Activated CD4-positive, alpha-beta memory T cell treated with anti-CD3 and anti-CD28 coated beads for 36 hours (primary cell): ENCODE measurements at regions of chr11 and their contacts with region 1.

Region 1: DNA sequence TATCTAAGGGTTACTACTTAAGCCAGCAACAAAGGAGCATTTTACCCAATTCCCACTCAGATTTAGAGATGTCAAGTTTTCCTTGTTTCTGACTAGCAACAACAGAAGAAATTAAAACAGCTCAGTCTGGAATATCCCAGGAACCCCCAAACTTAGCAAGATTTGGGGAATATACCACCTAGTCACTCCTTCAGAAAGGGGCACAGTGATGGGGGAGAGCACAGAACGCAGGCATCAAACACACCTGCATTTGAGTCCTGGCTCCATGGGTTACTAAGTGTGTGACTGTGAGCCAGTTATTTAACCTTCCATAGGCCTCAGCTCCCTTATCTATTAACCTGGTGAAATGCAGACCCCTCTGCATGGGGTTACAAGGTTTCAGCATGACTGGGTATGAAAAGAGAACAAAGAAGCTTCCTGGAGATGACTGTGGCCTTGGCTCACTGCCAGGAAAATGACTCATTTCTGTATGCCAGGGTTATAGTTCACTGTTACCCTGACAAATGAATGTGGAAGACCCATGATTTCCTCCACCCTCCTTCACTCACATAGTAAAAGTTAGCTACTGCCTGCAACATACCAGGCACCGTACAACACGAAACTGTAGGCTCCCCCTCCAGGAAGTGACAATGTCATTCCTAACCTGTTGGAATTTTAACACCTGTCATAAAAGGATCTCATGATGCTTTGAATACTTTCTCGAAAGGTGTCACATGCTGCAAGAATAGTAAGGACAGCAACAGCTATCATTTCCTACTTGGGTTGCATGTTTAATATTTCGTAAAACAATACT is 79.6 kb downstream of the ME3 start:
- DNase-seq: peak; percentile 94
- H3K4me3 Mint-ChIP-seq: no peak overlapping the region
- H3K27ac Mint-ChIP-seq: peak overlapping the region; percentile 66
- H3K4me1 Mint-ChIP-seq: peaks cover 51% of the 10 kb centered on the region
- H3K27me3 Mint-ChIP-seq: peaks cover 4% of the 10 kb centered on the region

Region 2: GRCh38 chr11:85826116-85826855 is 766.6 kb before region 1 on chr11:
- CTCF ChIA-PET with region 1: no interaction called
- POLR2A ChIA-PET with region 1: no interaction called
- intact Hi-C with region 1: loop called (anchors 5 kb)
- DNase-seq: peak; percentile 41
- H3K4me3 Mint-ChIP-seq: no peak overlapping the region
- H3K27ac Mint-ChIP-seq: peak overlapping the region; percentile 9
- H3K4me1 Mint-ChIP-seq: peaks cover 71% of the 10 kb centered on the region
- H3K27me3 Mint-ChIP-seq: no peaks in the 10 kb centered on the region

Region 3: GRCh38 chr11:86456052-86456939 is 136.6 kb before region 1 on chr11:
- CTCF ChIA-PET with region 1: interaction called, 4 read pairs
- POLR2A ChIA-PET with region 1: interaction called, 5 read pairs
- intact Hi-C with region 1: loop called (anchors 1 kb)
- DNase-seq: peak; percentile 88
- H3K4me3 Mint-ChIP-seq: no peak overlapping the region
- H3K27ac Mint-ChIP-seq: no peak overlapping the region
- H3K4me1 Mint-ChIP-seq: peaks cover 16% of the 10 kb centered on the region
- H3K27me3 Mint-ChIP-seq: no peaks in the 10 kb centered on the region

Region 4: DNA sequence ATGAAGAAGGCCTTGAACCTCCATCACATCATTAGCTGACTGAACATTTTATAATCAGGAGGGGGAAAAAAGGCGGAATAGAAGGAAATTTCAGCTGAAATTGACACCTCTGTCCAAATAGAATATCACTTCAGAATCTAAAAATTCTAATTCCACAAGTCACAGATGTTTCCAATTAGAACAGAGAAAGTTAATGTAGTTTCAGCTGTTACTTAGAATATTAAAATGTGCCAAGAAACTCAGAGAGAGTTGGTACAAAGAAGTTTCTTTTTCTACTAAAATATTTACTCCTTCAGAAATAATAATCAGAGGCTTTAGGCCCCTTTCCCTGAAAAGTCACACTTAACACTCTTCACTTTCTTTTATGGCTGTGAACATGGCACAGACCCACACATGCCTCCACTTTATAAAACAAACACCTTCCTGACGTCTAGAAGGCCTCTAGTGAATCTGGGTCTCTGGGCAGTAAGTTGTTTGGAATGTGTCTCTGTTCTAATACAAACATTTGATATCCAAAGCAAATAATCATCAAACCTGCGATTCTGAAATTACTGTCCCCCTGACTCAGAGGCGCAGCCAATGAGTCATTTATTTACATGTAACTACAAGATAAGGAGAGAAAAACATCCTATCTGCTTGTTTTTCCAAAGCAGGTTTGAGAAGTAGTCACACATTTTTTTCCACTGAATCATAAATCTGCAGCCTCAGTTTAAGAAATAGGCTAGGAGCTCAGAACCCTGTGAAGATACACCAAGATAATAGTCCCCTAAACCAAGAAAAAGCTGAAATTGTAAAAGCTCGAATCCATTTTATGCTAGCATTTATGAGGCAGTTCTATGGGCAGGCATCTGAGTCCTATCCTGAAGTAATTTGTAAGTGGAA is 68.9 kb before region 1 on chr11:
- CTCF ChIA-PET with region 1: no interaction called
- POLR2A ChIA-PET with region 1: no interaction called
- intact Hi-C with region 1: loop called (anchors 1 kb)
- DNase-seq: peak; percentile 22
- H3K4me3 Mint-ChIP-seq: no peak overlapping the region
- H3K27ac Mint-ChIP-seq: no peak overlapping the region
- H3K4me1 Mint-ChIP-seq: peaks cover 10% of the 10 kb centered on the region
- H3K27me3 Mint-ChIP-seq: peaks cover 8% of the 10 kb centered on the region

Region 5: GRCh38 chr11:86620891-86621521 is 28.2 kb after region 1 on chr11:
- CTCF ChIA-PET with region 1: no interaction called
- POLR2A ChIA-PET with region 1: no interaction called
- intact Hi-C with region 1: no loop called
- DNase-seq: no peak
- H3K4me3 Mint-ChIP-seq: no peak overlapping the region
- H3K27ac Mint-ChIP-seq: no peak overlapping the region
- H3K4me1 Mint-ChIP-seq: peaks cover 2% of the 10 kb centered on the region
- H3K27me3 Mint-ChIP-seq: peaks cover 2% of the 10 kb centered on the region

Region 6: GRCh38 chr11:86688398-86689179 is 95.7 kb after region 1 on chr11:
- CTCF ChIA-PET with region 1: no interaction called
- POLR2A ChIA-PET with region 1: no interaction called
- intact Hi-C with region 1: loop called (anchors 2 kb)
- DNase-seq: peak; percentile 61
- H3K4me3 Mint-ChIP-seq: no peak overlapping the region
- H3K27ac Mint-ChIP-seq: peak overlapping the region; percentile 83
- H3K4me1 Mint-ChIP-seq: peaks cover 20% of the 10 kb centered on the region
- H3K27me3 Mint-ChIP-seq: peaks cover 9% of the 10 kb centered on the region

Region 7: DNA sequence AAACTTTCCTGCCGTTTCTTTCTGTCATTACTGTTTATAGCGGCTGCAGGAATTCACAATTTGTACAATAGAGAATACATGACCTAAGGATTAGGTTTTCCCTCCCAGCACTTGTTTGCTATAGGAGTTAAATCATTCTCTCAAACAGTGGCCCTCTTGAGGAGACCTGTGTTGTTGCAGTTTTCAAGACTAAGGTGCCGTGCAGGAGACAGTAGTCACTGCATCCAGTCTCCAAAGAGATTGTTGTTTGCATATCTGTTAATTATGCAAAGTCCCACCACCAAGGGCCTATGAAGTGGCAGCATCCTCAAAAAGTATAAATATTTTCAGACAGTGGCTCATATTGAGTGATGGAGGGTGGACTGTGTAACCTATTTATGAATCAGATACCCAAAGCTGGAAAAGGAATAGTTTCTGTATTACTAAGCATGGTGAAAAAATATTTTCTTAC is 209.8 kb after region 1 on chr11:
- CTCF ChIA-PET with region 1: interaction called, 4 read pairs
- POLR2A ChIA-PET with region 1: interaction called, 11 read pairs
- intact Hi-C with region 1: loop called (anchors 1 kb)
- DNase-seq: peak; percentile 27
- H3K4me3 Mint-ChIP-seq: no peak overlapping the region
- H3K27ac Mint-ChIP-seq: no peak overlapping the region
- H3K4me1 Mint-ChIP-seq: peaks cover 57% of the 10 kb centered on the region
- H3K27me3 Mint-ChIP-seq: peaks cover 51% of the 10 kb centered on the region

Region 8: DNA sequence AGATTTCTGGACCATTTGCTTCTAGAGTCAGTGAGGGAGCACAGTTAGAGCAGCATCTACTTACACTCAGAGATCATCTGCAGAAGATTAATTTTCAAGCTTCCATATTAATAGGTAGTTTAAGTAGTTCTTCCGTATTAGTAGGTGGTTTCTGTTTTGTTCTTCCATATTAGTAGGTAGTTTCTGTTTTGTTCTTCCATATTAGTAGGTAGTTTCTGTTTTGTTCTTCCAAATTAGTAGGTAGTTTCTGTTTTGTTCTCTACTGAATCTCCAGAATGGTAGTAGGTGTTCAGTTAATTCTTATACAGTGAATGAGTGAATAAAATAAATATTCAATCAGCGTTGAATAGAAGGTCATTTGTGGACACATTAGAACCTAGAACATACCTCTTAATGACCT is 620.6 kb after region 1 on chr11:
- CTCF ChIA-PET with region 1: no interaction called
- POLR2A ChIA-PET with region 1: no interaction called
- intact Hi-C with region 1: loop called (anchors 5 kb)
- DNase-seq: no peak
- H3K4me3 Mint-ChIP-seq: no peak overlapping the region
- H3K27ac Mint-ChIP-seq: no peak overlapping the region
- H3K4me1 Mint-ChIP-seq: peaks cover 16% of the 10 kb centered on the region
- H3K27me3 Mint-ChIP-seq: no peaks in the 10 kb centered on the region